SK-MEL-5 (cell line): ENCODE measurements at regions of chr12 and their contacts with region 1.

Region 1: DNA sequence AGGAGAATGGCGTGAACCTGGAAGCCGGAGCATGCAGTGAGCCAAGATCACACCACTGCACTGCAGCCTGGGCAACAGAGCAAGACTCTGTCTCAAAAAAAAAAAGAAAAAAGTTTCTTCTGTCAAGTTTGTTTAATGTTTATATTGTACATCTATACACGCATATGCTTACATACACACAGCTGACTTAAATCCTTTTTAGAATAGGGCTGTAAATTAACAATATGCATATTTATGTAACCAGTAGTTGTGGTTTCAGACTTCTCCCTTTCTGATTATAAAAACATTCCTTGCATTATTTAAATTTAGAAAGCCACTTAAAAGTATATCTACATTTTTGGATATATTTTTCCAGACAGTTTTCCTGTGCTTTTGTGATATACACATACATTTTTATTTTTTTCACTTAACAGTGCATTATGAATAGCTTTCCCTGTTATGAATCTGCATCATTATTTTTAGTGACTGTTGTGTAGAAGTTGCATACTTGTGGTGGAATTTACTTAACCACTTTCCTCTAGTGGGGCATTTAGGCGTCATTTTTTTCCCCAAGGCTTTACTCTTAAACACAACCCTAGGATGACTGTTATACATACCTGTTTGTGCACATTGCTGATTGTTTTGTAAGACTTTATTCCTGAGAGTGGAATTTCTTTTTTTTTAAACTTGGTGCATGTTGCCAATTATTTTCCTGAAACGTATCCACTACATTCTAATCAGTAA is 29.4 kb downstream of the POLR3B start:
- DNase-seq: no peak

Region 2: DNA sequence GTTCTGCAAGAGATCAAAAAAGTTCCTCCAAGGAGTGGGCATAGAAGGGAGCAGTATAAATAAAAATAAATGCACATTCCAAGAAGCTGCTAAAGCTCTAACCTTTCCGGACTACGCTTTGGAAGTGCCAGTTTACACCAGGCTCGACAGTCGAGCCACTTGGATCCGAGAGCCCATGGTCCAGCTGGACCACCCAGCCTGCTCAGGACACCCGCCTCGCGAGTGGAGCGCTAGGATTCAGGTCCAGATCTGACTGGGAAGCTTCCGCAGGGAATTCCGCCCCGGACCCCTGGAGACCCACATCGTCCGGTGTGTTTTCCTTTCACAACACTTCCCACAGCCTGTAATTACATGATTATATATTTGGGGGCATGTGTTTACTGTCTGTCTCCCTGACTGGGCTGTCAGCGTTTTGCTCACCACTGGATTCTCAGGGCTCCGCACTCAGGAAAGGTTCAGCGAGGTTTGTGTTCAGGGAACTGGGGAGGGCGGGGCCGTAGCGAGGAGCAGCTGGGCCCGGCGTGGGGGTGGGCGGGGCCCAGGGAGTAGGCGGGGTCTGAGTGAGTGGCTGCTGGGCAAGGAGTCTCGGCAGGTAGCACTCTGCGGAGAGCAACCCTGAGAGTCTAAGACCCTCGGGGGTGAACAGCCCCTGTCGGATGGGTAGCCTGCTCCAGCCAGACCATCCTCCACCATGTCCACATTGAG is 516.4 kb after region 1 on chr12:
- in situ Hi-C with region 1: loop called (anchors 25 kb)
- DNase-seq: peak; percentile 68